Naive thymus-derived CD4-positive, alpha-beta T cell (primary cell): ENCODE measurements at regions of chr11 and their contacts with region 1.

Region 1: DNA sequence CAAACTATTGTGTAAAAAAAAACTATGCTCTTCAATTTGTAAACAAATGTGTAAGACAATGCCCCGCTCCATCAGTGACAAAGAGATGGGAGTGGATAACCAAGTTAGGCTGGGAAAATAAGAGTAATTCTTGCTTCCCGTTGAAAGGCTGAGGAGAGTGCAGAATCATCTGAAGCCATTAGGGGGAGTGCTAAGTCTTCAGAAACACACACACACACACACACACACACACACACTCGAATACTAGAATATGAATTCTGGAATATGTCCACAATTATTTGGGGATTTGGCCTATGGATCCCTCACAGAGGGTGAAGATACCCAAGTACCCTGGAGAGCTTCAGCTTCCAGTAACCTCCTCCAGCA is 27.8 kb upstream of the ROBO3 start:
- DNase-seq: peak in 5 of 9 donors; percentile 13 to 35 (median 33)
- ATAC-seq: peak; percentile 63
- H3K4me3 ChIP-seq: no peak overlapping the region
- H3K4me3 Mint-ChIP-seq: peak overlapping the region in 6 of 10 donors; percentile 3 to 83 (median 74)
- H3K27ac ChIP-seq: no peak overlapping the region
- H3K27ac Mint-ChIP-seq: peak overlapping the region in 1 of 9 donors; percentile 35
- H3K4me1 ChIP-seq: no peaks in the 10 kb centered on the region
- H3K4me1 Mint-ChIP-seq: peaks cover 9 to 25% (median 16%) of the 10 kb centered on the region in 7 donors
- H3K27me3 ChIP-seq: peaks cover 18 to 20% of the 10 kb centered on the region in 2 donors
- H3K27me3 Mint-ChIP-seq: peaks cover 58 to 85% (median 67%) of the 10 kb centered on the region in 5 donors

Region 2: DNA sequence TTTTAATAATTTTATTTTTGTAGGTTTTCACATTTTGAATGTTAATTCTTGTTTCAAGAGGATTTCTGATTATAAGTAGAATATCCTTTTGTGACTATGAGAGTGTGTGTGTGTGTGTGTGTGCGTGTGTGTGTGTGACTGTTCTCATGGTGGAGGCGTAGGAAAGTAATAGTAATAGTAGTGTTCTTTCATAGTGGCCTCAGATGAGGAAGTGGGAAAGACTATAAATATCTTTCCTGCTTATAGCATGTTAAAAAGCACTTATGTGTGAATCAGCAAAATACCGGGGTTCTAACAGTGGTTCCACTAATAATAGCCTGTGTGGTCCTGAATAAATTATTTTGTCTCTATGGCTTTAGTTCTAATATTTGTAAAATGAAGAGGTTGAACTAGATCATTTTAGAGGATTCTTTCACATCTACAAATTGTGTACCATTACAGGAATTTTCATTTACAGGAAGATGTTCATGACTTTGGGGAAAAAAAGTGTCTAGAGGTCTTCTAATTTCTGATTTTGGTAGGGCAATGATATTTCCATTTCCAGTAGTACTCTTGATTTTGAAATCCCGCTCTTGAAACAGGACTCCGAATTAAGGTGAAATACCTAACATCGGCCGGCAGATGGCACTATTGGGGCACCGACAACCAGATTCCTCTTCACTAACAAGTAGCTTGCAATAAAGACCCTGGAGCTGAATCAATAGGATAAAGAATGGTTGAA is 766.4 kb before region 1 on chr11:
- CTCF ChIA-PET with region 1: no interaction called
- POLR2A ChIA-PET with region 1: no interaction called
- intact Hi-C with region 1: loop called in 1 of 2 experiments (anchors 5 kb)
- DNase-seq: peak; percentile 33 to 63 (median 56)
- ATAC-seq: peak; percentile 57
- H3K4me3 ChIP-seq: no peak overlapping the region
- H3K4me3 Mint-ChIP-seq: no peak overlapping the region
- H3K27ac ChIP-seq: no peak overlapping the region
- H3K27ac Mint-ChIP-seq: no peak overlapping the region
- H3K4me1 ChIP-seq: no peaks in the 10 kb centered on the region
- H3K4me1 Mint-ChIP-seq: peaks cover 0 to 21% (median 0%) of the 10 kb centered on the region in 7 donors
- H3K27me3 ChIP-seq: peaks cover 0 to 4% of the 10 kb centered on the region in 2 donors
- H3K27me3 Mint-ChIP-seq: peaks cover 24 to 68% (median 54%) of the 10 kb centered on the region in 5 donors

Region 3: GRCh38 chr11:124644426-124645280 is 192.8 kb before region 1 on chr11:
- CTCF ChIA-PET with region 1: interaction called, 8 read pairs
- POLR2A ChIA-PET with region 1: no interaction called
- intact Hi-C with region 1: loop called (anchors 1 kb)
- DNase-seq: peak in 7 of 9 donors; percentile 6 to 28 (median 21)
- ATAC-seq: peak; percentile 88
- H3K4me3 ChIP-seq: no peak overlapping the region
- H3K4me3 Mint-ChIP-seq: no peak overlapping the region
- H3K27ac ChIP-seq: no peak overlapping the region
- H3K27ac Mint-ChIP-seq: no peak overlapping the region
- H3K4me1 ChIP-seq: no peaks in the 10 kb centered on the region
- H3K4me1 Mint-ChIP-seq: peaks cover 3 to 11% (median 5%) of the 10 kb centered on the region in 7 donors
- H3K27me3 ChIP-seq: no peaks in the 10 kb centered on the region
- H3K27me3 Mint-ChIP-seq: no peaks in the 10 kb centered on the region

Region 4: DNA sequence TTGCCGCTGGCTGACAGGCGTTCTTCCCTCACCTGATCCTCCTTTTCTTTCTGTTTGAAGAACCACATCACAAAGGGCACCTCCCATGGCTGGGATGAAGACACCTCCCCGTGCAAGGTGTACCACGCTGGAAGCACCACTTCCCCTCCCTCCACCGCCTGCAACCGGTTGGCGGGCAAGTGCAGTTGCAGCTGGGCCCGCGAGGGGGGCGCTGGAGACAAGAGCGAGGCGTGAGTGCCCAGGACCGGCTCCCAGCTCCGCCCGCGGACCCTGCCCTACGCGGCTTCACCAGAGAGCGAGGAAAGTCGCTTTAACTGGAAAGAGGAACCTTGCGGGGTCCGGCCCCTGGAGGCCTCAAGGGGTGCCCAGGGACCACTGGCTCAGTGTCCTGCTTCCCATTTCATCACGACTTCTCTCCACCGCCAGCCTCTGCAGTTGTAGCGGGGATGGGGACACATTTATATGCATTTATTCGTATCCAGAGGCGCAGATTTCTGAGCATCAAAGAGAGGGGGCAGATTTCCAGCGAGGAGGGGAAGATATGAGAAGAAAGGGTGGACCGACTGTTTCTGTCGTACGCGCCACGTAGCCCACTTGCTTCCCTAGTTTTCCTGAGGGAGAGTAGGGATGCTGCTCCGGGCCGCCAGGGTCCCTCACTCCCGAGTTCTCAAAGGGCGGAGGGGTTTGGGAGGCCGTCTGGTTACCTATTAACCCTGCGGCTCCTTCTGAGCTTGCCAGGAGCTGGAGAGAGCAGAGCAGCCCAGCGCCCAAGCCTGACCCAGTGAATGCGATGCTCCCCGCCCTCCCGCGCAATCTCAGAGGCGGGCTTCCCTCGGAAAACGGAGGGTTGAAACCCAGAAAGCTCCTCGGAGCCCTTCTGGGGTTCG is 78.9 kb before region 1 on chr11:
- CTCF ChIA-PET with region 1: interaction called, 6 read pairs
- POLR2A ChIA-PET with region 1: no interaction called
- intact Hi-C with region 1: loop called (anchors 1 kb)
- DNase-seq: peak in 8 of 9 donors; percentile 61 to 73 (median 66)
- ATAC-seq: peak; percentile 78
- H3K4me3 ChIP-seq: peak overlapping the region; percentile 27
- H3K4me3 Mint-ChIP-seq: peak overlapping the region; percentile 52 to 98 (median 76)
- H3K27ac ChIP-seq: no peak overlapping the region
- H3K27ac Mint-ChIP-seq: peak overlapping the region in 2 of 9 donors; percentile 38 to 41
- H3K4me1 ChIP-seq: peaks cover 8 to 31% of the 10 kb centered on the region in 2 donors
- H3K4me1 Mint-ChIP-seq: peaks cover 6 to 40% (median 24%) of the 10 kb centered on the region in 7 donors
- H3K27me3 ChIP-seq: peaks cover 7 to 16% of the 10 kb centered on the region in 2 donors
- H3K27me3 Mint-ChIP-seq: peaks cover 36 to 60% (median 53%) of the 10 kb centered on the region in 5 donors

Region 5: GRCh38 chr11:124865921-124866583 is 28.6 kb after region 1 on chr11:
- CTCF ChIA-PET with region 1: no interaction called
- POLR2A ChIA-PET with region 1: no interaction called
- intact Hi-C with region 1: loop called (anchors 1 to 2 kb)
- DNase-seq: peak in 8 of 9 donors; percentile 27 to 61 (median 46)
- ATAC-seq: peak; percentile 72
- H3K4me3 ChIP-seq: no peak overlapping the region
- H3K4me3 Mint-ChIP-seq: peak overlapping the region in 7 of 10 donors; percentile 37 to 68 (median 51)
- H3K27ac ChIP-seq: no peak overlapping the region
- H3K27ac Mint-ChIP-seq: peak overlapping the region in 1 of 9 donors; percentile 54
- H3K4me1 ChIP-seq: peaks cover 5 to 29% of the 10 kb centered on the region in 2 donors
- H3K4me1 Mint-ChIP-seq: peaks cover 7 to 67% (median 43%) of the 10 kb centered on the region in 7 donors
- H3K27me3 ChIP-seq: peaks cover 20 to 70% of the 10 kb centered on the region in 2 donors
- H3K27me3 Mint-ChIP-seq: peaks cover 80 to 97% (median 91%) of the 10 kb centered on the region in 5 donors

Region 6: GRCh38 chr11:125141686-125142535 is 304.4 kb after region 1 on chr11:
- CTCF ChIA-PET with region 1: no interaction called
- POLR2A ChIA-PET with region 1: no interaction called
- intact Hi-C with region 1: loop called in 1 of 2 experiments (anchors 1 kb)
- DNase-seq: peak; percentile 21 to 73 (median 48)
- ATAC-seq: peak; percentile 95
- H3K4me3 ChIP-seq: no peak overlapping the region
- H3K4me3 Mint-ChIP-seq: peak overlapping the region in 3 of 10 donors; percentile 10 to 49 (median 20)
- H3K27ac ChIP-seq: no peak overlapping the region
- H3K27ac Mint-ChIP-seq: no peak overlapping the region
- H3K4me1 ChIP-seq: no peaks in the 10 kb centered on the region
- H3K4me1 Mint-ChIP-seq: peaks cover 0 to 6% (median 5%) of the 10 kb centered on the region in 7 donors
- H3K27me3 ChIP-seq: peaks cover 0 to 5% of the 10 kb centered on the region in 2 donors
- H3K27me3 Mint-ChIP-seq: peaks cover 15 to 47% (median 27%) of the 10 kb centered on the region in 5 donors